MCF 10A (cell line): ENCODE measurements at regions of chr12 and their contacts with region 1.

Region 1: DNA sequence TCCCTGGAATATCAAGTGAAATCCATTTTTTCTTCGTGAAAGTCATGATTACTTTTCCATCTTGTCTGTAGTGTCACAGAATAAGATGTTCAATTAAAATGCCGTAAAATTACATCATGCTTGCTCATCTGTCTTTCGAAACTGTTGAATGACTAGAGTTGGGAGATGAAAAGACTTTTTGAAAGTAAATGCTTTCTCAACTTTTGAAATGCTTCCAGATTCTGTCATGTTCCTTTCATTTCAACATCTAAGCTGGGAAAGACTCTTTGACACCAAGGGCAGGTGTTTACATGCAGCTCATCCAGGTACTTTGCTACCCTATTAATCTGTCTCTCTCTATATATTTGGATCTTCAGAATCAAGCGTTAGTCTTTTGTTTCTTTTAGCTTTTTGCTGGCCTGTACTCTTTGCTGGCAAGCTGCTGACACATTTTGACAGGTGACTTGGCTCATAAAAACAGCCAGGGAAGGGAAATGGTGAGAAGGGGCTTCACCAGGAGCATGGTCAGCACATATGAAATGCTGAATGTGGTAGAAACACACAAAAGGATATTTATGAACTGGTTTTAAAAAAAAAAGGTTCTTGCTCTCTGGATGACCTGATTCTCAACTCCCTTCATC is 77.0 kb upstream of the METAP2 start:
- DNase-seq: peak; percentile 94
- H3K4me3 Mint-ChIP-seq: peak overlapping the region; percentile 3
- H3K27ac Mint-ChIP-seq: peak overlapping the region; percentile 34
- H3K4me1 Mint-ChIP-seq: peaks cover 19% of the 10 kb centered on the region
- H3K27me3 Mint-ChIP-seq: peaks cover 11% of the 10 kb centered on the region
- CTCF ChIP-seq: no peak

Region 2: DNA sequence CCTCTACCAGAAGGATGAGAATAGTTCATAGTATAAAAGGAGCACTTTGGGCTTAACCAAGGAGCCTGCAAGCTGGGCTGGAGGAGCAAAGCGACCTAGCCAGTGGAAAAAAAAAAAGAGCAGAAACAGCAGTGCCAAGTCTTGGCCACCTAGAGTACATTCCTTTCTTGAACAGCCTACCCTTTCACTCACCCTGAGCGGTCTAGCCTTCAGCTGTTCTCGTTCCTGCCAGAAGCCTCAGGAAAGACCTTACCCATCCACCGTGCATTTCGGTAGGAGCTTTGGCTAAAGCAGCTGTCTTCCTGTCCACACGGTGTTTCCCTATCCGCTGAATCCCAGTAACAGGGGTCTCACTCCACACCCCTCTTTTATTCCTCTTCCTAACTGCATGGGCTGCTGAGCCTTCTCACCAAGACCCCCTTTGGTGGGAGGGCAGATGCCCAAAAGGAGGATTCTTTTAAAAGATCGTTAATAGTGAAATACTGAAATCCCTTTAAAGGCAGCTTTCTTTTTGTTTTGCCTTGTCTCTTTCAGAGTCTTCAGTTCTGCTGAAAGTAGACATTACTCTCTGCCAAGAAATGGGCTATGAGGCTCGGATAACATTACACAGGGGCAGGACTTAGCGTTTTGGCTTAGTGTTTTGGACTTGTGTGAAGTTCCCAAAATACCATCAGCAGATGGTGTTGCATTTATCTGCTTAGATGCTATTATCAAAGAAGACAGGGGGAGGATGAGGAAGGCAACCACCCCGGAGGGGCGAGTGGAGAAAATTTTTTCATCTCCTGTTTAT is 11.5 kb before region 1 on chr12:
- CTCF ChIA-PET with region 1: no interaction called
- POLR2A ChIA-PET with region 1: interaction called, 44 read pairs
- intact Hi-C with region 1: no loop called
- DNase-seq: peak; percentile 43
- H3K4me3 Mint-ChIP-seq: peak overlapping the region; percentile 6
- H3K27ac Mint-ChIP-seq: peak overlapping the region; percentile 67
- H3K4me1 Mint-ChIP-seq: peaks cover 16% of the 10 kb centered on the region
- H3K27me3 Mint-ChIP-seq: no peaks in the 10 kb centered on the region
- CTCF ChIP-seq: no peak

Region 3: GRCh38 chr12:95412482-95413311 is 15.7 kb after region 1 on chr12:
- CTCF ChIA-PET with region 1: interaction called, 3 read pairs
- POLR2A ChIA-PET with region 1: interaction called, 33 read pairs
- intact Hi-C with region 1: no loop called
- DNase-seq: peak; percentile 78
- H3K4me3 Mint-ChIP-seq: no peak overlapping the region
- H3K27ac Mint-ChIP-seq: peak overlapping the region; percentile 27
- H3K4me1 Mint-ChIP-seq: no peaks in the 10 kb centered on the region
- H3K27me3 Mint-ChIP-seq: no peaks in the 10 kb centered on the region
- CTCF ChIP-seq: no peak

Region 4: GRCh38 chr12:95424271-95424994 is 27.5 kb after region 1 on chr12:
- CTCF ChIA-PET with region 1: no interaction called
- POLR2A ChIA-PET with region 1: no interaction called
- intact Hi-C with region 1: no loop called
- DNase-seq: no peak
- H3K4me3 Mint-ChIP-seq: no peak overlapping the region
- H3K27ac Mint-ChIP-seq: no peak overlapping the region
- H3K4me1 Mint-ChIP-seq: no peaks in the 10 kb centered on the region
- H3K27me3 Mint-ChIP-seq: no peaks in the 10 kb centered on the region
- CTCF ChIP-seq: no peak

Region 5: DNA sequence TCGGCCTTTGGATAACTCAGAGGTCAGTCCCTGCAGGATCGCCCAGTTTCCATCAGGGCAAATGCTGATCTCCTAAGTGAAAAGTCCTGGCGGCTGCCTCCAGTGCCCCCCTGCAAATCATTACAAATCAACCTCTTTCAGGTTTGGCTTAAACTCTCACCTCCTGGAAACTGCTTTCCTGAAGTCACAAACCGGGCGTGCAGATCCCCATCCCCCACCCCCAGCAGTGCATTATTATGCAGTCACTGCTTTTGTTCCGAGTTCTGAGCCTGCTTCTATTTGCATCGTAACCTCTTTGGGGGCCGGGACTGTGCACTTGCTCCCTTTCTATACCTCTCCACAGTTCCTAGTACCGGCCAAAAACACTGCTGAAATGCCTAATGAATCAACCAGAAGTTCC is 154.3 kb after region 1 on chr12 and contains the start of gene USP44:
- CTCF ChIA-PET with region 1: no interaction called
- POLR2A ChIA-PET with region 1: no interaction called
- intact Hi-C with region 1: no loop called
- DNase-seq: no peak
- H3K4me3 Mint-ChIP-seq: no peak within 1 kb of the TSS
- H3K27ac Mint-ChIP-seq: no peak within 1 kb of the TSS
- H3K4me1 Mint-ChIP-seq: no peaks in the 10 kb centered on the region
- H3K27me3 Mint-ChIP-seq: no peaks in the 10 kb centered on the region
- CTCF ChIP-seq: no peak
- total RNA-seq, gene USP44: not detected in 2 replicates